Activated T-helper 1 cell treated with anti-CD3 and anti-CD28 coated beads, Interleukin-12 subunit alpha, Interleukin-12 subunit beta, Interleukin-2, Interleukin-4 antibody, amounts not matched to agents 30 ng/mL and 10 ng/mL and 1 ng/mL, durations not matched to agents 14 hours and 24 hours and 36 hours (primary cell): ENCODE measurements at regions of chr22 and their contacts with region 1.

Region 1: DNA sequence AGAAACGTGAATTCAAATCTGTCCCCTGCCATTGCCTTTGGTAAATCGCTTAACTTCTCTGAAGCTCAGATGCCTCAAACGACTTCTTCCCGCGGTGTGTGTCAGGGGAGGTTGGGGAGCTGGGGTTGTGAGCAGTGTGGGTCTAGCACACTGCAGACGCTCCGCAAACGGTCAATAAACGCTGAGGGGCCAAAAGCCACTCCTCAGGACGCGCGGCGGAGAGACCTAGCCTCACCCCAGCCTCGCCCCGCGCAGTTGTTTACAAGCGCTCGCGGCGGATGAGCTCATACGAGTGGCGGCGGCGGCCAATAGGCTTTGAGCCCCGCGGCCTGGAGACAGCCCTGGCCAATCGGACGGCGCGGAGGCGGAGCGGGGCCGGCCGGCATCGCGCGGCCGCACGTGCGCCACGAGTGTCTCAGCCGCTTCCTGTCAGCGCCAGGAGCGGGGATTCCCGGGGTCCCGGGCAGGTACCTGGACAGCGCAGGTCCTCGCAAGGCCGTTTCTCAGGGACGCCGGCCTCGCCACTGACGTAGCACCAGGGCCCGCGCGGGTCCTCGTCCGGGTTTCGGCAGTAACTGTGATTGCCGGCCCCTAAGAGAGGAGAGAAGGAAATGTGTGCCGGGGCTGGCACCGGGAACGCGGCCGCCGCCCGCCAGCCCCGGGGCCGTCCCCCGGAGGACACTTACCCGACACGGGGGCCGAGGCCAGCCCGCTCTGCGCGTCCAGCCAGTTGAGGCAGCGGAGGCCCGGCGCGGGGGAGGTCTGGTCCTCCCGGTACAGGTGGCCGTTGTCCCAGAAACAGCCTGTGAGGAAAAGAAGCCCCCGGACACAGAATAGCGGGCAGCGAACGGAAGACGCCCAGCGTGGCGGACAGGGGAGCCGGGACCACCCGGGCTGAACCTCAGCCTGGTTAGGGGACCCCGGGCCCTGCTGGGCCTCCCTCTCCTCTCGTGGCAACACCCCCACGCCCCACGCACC is 1.5 kb downstream of the PIK3IP1 start:
- DNase-seq: peak; percentile 93
- H3K4me3 Mint-ChIP-seq: peak overlapping the region; percentile 96
- H3K27ac Mint-ChIP-seq: peak overlapping the region; percentile 99
- H3K4me1 Mint-ChIP-seq: peaks cover 77% of the 10 kb centered on the region
- H3K27me3 Mint-ChIP-seq: no peaks in the 10 kb centered on the region

Region 2: DNA sequence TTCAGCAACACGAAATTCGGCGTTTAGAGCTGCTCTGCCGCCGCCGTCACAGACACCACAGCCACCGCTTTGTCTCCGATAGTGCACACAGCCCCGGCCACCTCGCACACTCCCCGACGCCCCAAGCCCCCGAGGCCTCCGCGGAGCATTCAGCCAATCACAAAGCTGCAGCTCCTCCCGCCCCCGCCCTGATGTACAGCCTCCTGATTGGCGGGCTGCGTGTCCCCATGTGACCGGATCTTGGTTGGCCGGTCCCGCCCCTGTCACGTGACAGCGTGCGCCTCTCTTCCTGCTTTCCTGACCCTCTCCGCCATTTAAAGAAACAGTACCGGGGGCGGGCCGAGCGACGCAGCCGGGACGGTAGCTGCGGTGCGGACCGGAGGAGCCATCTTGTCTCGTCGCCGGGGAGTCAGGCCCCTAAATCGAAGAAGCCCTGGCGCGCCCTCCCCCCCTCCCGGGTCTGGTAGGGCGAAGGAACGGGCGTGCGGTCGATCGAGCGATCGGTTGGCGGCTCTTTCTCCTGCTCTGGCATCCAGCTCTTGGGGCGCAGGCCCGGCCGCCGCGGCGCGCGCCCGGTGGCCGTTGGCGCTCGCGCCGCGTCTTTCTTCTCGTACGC is 321.8 kb before region 1 on chr22 and contains the start of gene TUG1:
- intact Hi-C with region 1: loop called (anchors 5 kb)
- DNase-seq: peak; percentile 97
- H3K4me3 Mint-ChIP-seq: peak within 1 kb of the TSS; percentile 91
- H3K27ac Mint-ChIP-seq: peak within 1 kb of the TSS; percentile 96
- H3K4me1 Mint-ChIP-seq: peaks cover 65% of the 10 kb centered on the region
- H3K27me3 Mint-ChIP-seq: no peaks in the 10 kb centered on the region
- total RNA-seq, gene TUG1: 68.0 and 71.3 TPM in 2 replicates

Region 3: DNA sequence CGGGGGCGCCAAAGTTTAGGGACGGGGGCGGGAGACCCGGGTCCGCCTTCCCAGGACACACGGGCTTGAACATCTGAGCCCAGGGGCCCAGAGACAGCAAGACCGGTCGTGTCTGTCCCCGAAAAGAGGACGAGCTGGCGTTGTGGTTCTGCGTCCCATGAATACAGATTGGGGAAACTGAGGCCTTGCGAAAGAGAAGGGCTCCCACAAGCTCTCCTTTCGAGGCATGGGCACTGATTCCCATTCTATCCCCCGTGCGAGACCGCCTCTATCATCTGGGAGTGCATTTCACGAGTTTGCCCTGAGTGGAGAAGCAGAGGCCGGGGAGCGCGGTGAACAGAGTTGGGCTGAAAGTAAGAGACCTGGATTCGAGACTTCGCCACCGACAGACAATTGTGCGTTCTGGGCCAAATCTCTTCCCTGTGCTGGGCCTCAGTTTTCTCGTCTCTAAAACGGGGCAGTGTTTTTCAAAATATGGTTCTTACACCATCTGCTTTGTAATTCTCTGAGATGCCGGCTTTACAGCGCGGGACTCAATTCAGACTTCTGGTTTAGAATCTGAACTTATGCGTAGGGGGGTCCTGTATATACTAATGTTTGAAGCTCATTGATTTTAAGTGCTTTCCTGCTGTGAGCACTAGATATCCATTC is 130.3 kb before region 1 on chr22:
- intact Hi-C with region 1: loop called (anchors 2 kb)
- DNase-seq: peak; percentile 9
- H3K4me3 Mint-ChIP-seq: peak overlapping the region; percentile 100
- H3K27ac Mint-ChIP-seq: peak overlapping the region; percentile 95
- H3K4me1 Mint-ChIP-seq: peaks cover 42% of the 10 kb centered on the region
- H3K27me3 Mint-ChIP-seq: peaks cover 15% of the 10 kb centered on the region

Region 4: DNA sequence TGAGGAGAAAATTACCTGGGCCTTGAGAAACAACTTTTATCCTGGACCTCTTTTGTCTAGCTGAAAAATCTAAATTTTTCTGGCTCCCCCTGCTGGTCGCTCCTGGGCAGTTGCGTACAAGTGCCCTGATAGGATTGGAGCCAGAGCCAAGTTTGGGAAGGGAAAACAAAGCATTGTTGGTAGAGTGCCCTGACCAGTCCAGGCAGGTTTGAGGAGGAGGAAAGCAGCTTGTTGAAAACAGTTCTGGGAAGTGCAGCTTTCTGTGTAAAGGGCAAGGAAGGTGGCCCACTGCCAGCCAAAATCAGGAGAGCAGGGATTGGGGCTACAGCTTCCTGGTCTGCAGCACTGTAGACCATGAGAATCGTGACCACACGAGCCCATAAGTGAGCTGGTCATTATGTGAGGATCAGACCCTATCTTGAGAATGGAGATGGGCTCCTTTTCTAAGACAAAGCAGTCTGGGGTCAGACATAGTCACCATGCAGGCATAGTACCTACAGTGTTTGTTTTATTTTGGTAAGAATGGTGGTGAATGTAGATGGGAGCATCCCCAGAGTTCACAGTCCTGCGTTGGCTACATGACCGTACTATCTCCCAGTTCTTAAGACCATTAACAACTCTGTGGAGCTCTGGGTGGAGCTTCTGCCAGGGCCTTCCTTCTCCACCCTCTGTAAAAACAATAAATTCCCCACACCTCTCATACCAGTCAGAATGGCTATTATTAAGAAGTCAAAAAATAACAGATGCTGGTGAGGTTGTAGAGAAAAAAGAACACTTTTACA is 22.8 kb after region 1 on chr22:
- intact Hi-C with region 1: loop called (anchors 1 kb)
- DNase-seq: peak; percentile 41
- H3K4me3 Mint-ChIP-seq: no peak overlapping the region
- H3K27ac Mint-ChIP-seq: no peak overlapping the region
- H3K4me1 Mint-ChIP-seq: peaks cover 9% of the 10 kb centered on the region
- H3K27me3 Mint-ChIP-seq: no peaks in the 10 kb centered on the region

Region 5: DNA sequence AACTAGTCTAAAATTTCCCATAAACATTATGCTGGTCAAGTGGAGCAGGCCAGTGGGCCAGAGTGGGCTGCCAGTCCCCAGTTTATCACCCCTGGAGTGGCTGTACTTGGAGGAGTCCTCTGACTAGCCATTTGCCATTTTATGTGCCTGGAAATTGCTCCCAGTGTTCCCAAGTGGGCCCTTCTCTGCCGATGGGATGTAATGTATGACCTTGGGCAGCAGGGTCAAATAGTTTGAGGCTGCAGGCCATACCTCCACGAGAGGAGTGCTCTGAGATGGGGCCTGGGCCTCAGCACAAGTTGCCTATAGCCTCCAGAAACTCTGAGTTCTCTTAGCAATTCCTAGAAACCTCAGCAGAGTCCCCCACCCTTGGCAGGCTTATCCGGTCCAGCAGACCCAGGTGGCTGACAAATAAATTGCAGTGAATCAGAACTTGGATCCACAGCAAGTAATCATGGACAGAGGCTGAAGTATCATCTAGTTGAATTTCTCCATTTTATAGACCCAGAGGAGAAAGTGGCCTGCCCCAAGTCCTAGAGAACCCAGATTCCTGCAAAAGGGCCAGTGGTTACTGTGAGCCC is 73.2 kb after region 1 on chr22:
- intact Hi-C with region 1: no loop called
- DNase-seq: no peak
- H3K4me3 Mint-ChIP-seq: no peak overlapping the region
- H3K27ac Mint-ChIP-seq: no peak overlapping the region
- H3K4me1 Mint-ChIP-seq: peaks cover 5% of the 10 kb centered on the region
- H3K27me3 Mint-ChIP-seq: peaks cover 1% of the 10 kb centered on the region

Region 6: GRCh38 chr22:31399211-31400028 is 108.6 kb after region 1 on chr22 and contains the start of gene DRG1:
- intact Hi-C with region 1: loop called (anchors 2 kb)
- DNase-seq: peak; percentile 97
- H3K4me3 Mint-ChIP-seq: peak within 1 kb of the TSS; percentile 100
- H3K27ac Mint-ChIP-seq: peak within 1 kb of the TSS; percentile 93
- H3K4me1 Mint-ChIP-seq: peaks cover 13% of the 10 kb centered on the region
- H3K27me3 Mint-ChIP-seq: peaks cover 2% of the 10 kb centered on the region
- total RNA-seq, gene DRG1: 113 and 125 TPM in 2 replicates